ENCODE measurements at regions of chr16 and their contacts with region 1.

Region 1: DNA sequence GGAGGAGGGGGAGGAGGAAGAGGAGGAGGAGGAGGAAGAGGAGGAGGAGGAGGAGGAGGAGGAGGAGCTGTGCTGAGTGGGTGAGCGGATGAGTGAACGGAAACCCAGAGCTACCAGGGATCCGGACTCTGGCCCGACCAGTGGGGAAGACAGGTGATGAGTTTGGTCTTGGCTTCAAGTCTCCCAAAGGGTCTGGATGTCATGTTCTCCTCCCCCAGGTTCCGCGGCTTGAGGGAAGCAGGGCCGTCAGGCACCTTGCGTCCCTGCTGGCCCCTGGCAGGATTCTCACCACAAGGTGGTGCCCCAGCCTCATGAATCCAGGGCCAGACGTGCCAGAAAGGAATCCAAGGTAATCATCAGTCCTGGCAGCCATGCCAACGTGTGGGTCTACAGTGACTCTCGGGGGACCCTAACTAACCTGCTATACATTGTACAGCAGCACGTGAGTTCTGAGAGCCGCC is 13.5 kb upstream of the ABAT start:
- DNase-seq: peak; percentile 77 to 92 (median 86)
- H3K4me3 ChIP-seq: no peak overlapping the region
- H3K27ac ChIP-seq: no peak overlapping the region
- H3K4me1 ChIP-seq: no peaks in the 10 kb centered on the region
- H3K27me3 ChIP-seq: no peaks in the 10 kb centered on the region
- CTCF ChIP-seq: peak; percentile 84

Region 2: DNA sequence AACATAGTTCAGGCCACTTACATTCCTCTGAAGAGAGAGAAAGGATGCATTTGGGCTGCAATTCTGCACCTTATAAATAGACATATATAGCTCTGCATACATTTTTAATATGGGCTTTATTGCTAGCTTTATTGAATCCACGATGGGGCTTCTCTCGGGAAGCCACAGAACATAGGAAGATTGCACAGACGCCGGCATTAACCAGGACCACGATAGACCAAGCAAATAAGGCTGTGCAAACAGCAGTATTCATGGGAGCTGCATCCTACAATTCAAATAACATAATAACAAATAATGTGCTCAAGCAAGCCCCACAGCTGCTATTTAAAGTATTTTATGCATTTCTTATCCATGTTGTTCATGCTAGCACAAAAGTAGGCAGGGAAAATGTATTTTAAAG is 502.8 kb before region 1 on chr16:
- intact Hi-C with region 1: no loop called
- DNase-seq: no peak
- H3K4me3 ChIP-seq: no peak overlapping the region
- H3K27ac ChIP-seq: no peak overlapping the region
- H3K4me1 ChIP-seq: no peaks in the 10 kb centered on the region
- H3K27me3 ChIP-seq: no peaks in the 10 kb centered on the region
- CTCF ChIP-seq: no peak

Region 3: DNA sequence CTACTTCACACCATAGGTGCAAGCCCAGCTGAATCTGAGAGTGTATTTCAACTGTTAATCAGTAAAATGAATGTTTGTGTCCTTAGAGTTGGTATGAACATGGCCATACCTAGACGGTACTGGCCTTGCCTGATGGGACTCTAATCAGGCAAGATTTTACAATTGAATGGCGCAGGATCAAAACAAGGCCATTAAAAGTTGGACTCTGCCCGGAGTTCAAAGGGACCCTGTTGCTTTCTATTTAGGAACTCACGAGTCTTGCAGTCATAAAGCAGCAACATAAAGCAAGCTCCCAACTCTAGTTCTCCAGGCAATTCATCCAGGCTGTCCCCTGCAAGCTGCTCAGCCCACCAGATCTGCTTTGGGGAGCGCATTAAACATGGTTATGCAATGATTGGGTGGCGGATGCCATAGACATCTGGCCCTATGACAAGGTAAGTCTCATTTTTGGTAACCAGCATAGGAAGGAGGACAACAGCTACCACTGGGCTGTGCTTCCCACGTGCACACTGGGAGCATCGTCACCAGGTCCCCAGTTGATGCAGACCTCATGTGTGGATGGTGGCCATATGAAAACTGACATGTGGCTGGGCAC is 127.8 kb after region 1 on chr16:
- intact Hi-C with region 1: loop called (anchors 10 kb)
- DNase-seq: peak in 3 of 5 donors; percentile 23 to 76 (median 48)
- H3K4me3 ChIP-seq: peak overlapping the region in 2 of 3 donors; percentile 60 to 72
- H3K27ac ChIP-seq: peak overlapping the region; percentile 45 to 79
- H3K4me1 ChIP-seq: peaks cover 0 to 3% (median 0%) of the 10 kb centered on the region in 3 donors
- H3K27me3 ChIP-seq: no peaks in the 10 kb centered on the region
- CTCF ChIP-seq: no peak